Right lobe of liver (tissue), 6 donors: ENCODE measurements at regions of chr9 and their contacts with region 1.

Region 1: DNA sequence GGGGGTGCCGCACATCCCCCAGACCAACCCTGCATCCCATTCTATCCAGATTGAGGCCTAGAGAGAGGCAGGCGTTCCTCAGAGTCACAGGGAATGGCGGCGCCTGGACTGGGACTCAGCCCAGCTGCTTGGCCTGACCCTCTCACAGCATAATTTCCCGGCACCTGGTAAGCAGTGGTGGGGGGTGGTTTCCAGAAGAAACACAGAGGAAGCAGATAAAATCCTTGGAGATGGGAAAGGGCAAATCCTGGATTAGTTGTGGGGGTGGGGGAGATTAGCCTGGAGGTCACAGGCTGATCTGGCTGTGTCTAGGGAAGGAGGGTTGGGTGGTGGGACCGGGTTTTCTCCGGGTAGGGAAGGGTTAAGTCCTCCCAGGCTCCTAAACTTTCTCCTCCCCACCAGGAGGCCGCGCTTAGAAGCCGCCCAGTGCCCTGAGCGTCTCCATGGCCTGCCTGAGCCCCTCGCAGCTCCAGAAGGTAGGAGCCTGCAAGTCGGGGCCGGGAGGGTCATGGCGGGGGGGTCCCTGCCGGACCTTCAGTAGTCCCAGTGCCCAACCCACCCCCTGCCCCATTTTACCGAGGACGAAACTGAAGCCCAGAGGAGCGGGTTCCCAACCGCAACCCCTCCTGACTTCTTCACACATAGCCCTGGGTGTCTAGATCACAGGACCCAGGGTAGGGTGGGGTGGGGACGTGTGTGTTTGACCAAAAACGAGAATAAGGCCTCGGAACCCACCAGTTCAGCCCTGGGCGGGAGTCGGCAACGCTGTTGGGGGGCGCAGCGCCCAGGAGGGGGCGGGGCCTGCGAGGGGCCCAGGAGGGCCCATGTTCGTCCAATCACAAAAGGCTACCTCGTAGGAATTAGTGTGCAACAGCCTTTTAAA is 1.3 kb downstream of the PHYHD1 start:
- DNase-seq: peak; percentile 64 to 78 (median 77)
- ATAC-seq: peak; percentile 44 to 65 (median 55)
- H3K4me3 ChIP-seq: peak overlapping the region; percentile 64 to 76 (median 65)
- H3K27ac ChIP-seq: peak overlapping the region; percentile 84 to 92 (median 88)
- H3K4me1 ChIP-seq: peaks cover 0 to 49% (median 21%) of the 10 kb centered on the region in 4 donors
- H3K27me3 ChIP-seq: no peaks in the 10 kb centered on the region
- CTCF ChIP-seq: no peak
- POLR2A ChIP-seq: no peak

Region 2: DNA sequence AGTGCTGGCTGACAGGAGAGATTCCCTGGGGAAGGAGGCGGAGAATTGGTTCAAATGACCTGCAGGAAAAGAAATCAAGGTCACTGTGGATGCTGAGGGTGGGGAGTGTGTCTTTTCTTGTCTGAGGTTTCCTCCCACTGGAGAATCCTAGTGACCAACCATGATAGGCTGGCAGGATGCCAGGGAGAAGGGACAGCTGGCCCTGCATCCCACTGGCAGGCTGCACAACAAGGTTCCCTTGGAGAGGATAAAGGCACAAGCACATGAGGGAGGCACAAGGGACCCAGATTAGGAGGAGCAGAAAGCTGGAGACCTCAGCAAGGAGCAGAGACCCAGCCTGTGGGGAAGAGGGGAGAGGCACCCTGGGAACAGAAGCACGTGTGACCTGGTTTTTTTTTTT is 186.7 kb before region 1 on chr9:
- intact Hi-C with region 1: no loop called
- DNase-seq: no peak
- ATAC-seq: no peak
- H3K4me3 ChIP-seq: no peak overlapping the region
- H3K27ac ChIP-seq: no peak overlapping the region
- H3K4me1 ChIP-seq: no peaks in the 10 kb centered on the region
- H3K27me3 ChIP-seq: no peaks in the 10 kb centered on the region
- CTCF ChIP-seq: no peak
- POLR2A ChIP-seq: no peak

Region 3: GRCh38 chr9:128881901-128882681 is 40.0 kb before region 1 on chr9 and contains the starts of genes KYAT1 and LRRC8A:
- intact Hi-C with region 1: loop called (anchors 5 kb)
- DNase-seq: peak; percentile 98 to 99 (median 99)
- ATAC-seq: peak; percentile 73 to 81 (median 78)
- H3K4me3 ChIP-seq: peak within 1 kb of the TSS; percentile 94 to 99 (median 98)
- H3K27ac ChIP-seq: peak within 1 kb of the TSS; percentile 97 to 98 (median 98)
- H3K4me1 ChIP-seq: peaks cover 0 to 40% (median 16%) of the 10 kb centered on the region in 4 donors
- H3K27me3 ChIP-seq: no peaks in the 10 kb centered on the region
- CTCF ChIP-seq: peak in 3 of 4 donors; percentile 6 to 21 (median 12)
- POLR2A ChIP-seq: peak; percentile 96
- total RNA-seq, gene KYAT1: 7.2 to 12.7 (median 10.4) TPM
- total RNA-seq, gene LRRC8A: 8.6 to 46.1 (median 22.1) TPM

Region 4: GRCh38 chr9:129013674-129014504 is 91.8 kb after region 1 on chr9:
- intact Hi-C with region 1: no loop called
- DNase-seq: peak in 1 of 3 donors; percentile 53
- ATAC-seq: peak in 2 of 4 donors; percentile 6 to 50
- H3K4me3 ChIP-seq: no peak overlapping the region
- H3K27ac ChIP-seq: no peak overlapping the region
- H3K4me1 ChIP-seq: no peaks in the 10 kb centered on the region
- H3K27me3 ChIP-seq: no peaks in the 10 kb centered on the region
- CTCF ChIP-seq: no peak
- POLR2A ChIP-seq: no peak